Naive thymus-derived CD4-positive, alpha-beta T cell (primary cell): ENCODE measurements at regions of chr9 and their contacts with region 1.

Region 1: DNA sequence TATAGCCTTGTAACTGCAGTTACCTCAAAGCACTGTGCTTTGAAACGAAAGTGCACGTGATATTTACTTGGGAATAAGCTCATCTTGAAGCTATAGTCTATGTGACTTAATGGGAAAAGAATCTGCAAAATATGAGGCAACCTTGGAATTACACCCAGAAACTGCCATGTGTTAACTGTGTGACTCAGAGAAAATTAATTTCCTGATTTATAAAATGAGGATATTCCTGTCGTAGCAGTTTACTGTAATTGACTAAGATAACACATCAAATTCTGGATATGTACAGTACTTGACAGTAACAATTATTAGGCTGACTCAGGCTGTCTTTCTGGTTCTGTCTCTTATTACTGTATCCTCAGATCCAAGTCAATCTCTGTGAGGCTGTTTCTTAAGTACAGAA is 1079.9 kb upstream of the ACO1 start:
- DNase-seq: no peak
- ATAC-seq: no peak
- H3K4me3 ChIP-seq: no peak overlapping the region
- H3K4me3 Mint-ChIP-seq: no peak overlapping the region
- H3K27ac ChIP-seq: no peak overlapping the region
- H3K27ac Mint-ChIP-seq: no peak overlapping the region
- H3K4me1 ChIP-seq: peaks cover 6 to 10% of the 10 kb centered on the region in 2 donors
- H3K4me1 Mint-ChIP-seq: peaks cover 8 to 40% (median 34%) of the 10 kb centered on the region in 7 donors
- H3K27me3 ChIP-seq: no peaks in the 10 kb centered on the region
- H3K27me3 Mint-ChIP-seq: no peaks in the 10 kb centered on the region

Region 2: GRCh38 chr9:31259824-31260223 is 44.8 kb before region 1 on chr9:
- CTCF ChIA-PET with region 1: no interaction called
- POLR2A ChIA-PET with region 1: interaction called, 3 read pairs
- intact Hi-C with region 1: loop called in 1 of 2 experiments (anchors 1 kb)
- DNase-seq: peak in 7 of 9 donors; percentile 56 to 85 (median 80)
- ATAC-seq: peak; percentile 97
- H3K4me3 ChIP-seq: no peak overlapping the region
- H3K4me3 Mint-ChIP-seq: peak overlapping the region; percentile 15 to 72 (median 54)
- H3K27ac ChIP-seq: peak overlapping the region; percentile 19
- H3K27ac Mint-ChIP-seq: peak overlapping the region; percentile 3 to 96 (median 87)
- H3K4me1 ChIP-seq: peaks cover 0 to 16% of the 10 kb centered on the region in 2 donors
- H3K4me1 Mint-ChIP-seq: peaks cover 3 to 33% (median 20%) of the 10 kb centered on the region in 7 donors
- H3K27me3 ChIP-seq: no peaks in the 10 kb centered on the region
- H3K27me3 Mint-ChIP-seq: no peaks in the 10 kb centered on the region

Region 3: DNA sequence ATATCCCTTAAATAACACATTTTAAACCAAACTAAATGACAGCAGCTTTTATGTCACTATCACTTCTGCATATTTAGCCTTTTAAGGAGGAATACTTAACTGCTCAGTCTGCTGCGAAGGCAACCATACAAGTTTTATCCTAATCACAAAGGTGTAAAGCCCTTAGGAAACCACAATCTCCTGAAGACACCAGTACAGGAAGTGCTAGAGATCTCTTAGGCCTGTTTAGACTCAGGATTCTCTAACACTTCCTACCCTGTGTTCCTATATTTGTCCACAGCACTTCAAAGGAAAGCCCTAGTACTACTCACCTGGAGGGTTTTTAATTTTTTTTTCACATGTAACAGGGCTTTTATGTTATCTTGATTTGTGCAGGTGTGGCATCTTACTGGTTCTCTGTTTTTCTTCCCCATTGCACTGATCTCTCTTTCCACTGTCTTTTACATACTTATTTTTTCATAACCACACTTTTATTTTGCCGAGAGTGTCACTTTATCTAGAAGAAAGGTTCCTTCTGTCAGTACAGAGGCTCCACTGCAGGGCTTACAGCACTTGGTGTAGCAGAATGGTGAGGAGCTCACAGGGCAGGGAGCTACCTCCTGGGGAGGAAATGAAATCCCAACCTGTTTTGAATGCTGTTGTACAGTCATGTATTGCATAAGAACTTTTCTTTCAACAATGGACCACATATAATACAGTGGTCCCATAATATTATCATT is 19.3 kb after region 1 on chr9:
- CTCF ChIA-PET with region 1: no interaction called
- POLR2A ChIA-PET with region 1: no interaction called
- intact Hi-C with region 1: loop called in 1 of 2 experiments (anchors 2 kb)
- DNase-seq: peak in 6 of 9 donors; percentile 35 to 69 (median 55)
- ATAC-seq: peak; percentile 73
- H3K4me3 ChIP-seq: peak overlapping the region; percentile 7
- H3K4me3 Mint-ChIP-seq: peak overlapping the region in 9 of 10 donors; percentile 18 to 72 (median 57)
- H3K27ac ChIP-seq: peak overlapping the region; percentile 49
- H3K27ac Mint-ChIP-seq: peak overlapping the region; percentile 30 to 95 (median 78)
- H3K4me1 ChIP-seq: peaks cover 18 to 32% of the 10 kb centered on the region in 2 donors
- H3K4me1 Mint-ChIP-seq: peaks cover 10 to 53% (median 47%) of the 10 kb centered on the region in 7 donors
- H3K27me3 ChIP-seq: no peaks in the 10 kb centered on the region
- H3K27me3 Mint-ChIP-seq: no peaks in the 10 kb centered on the region

Region 4: DNA sequence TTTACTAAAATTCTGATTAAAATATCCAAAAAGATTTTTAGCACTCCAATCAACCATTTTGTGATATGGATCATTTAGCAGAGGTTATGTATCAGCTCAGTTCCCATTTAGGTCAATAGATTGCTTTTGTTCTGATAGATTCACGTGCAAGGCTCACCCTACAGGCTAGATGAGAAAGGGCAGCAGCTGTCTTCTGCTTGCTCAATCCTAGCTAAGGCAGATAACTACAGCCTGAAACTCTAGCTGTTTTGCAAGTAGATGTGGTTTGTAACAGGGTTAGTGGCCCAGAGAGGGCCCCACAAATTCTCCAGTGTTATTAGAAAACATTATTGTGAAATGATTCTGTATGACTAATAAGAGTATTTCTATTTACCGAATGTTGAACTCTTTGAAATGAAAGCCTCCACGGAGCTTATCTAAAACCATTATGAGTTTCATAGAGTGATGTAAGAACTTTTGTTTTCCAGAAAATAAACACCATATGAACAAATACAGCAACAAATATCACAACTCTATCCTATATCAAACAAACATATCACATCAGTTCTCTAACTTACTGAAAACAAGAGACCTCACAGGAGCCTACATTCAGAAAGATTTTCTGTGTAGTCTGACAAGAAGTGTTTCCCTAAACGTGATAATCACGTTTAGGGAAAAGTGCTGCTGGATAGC is 237.9 kb after region 1 on chr9:
- CTCF ChIA-PET with region 1: interaction called, 7 read pairs
- POLR2A ChIA-PET with region 1: interaction called, 4 read pairs
- intact Hi-C with region 1: loop called in 1 of 2 experiments (anchors 1 kb)
- DNase-seq: peak in 5 of 9 donors; percentile 3 to 25 (median 18)
- ATAC-seq: peak; percentile 79
- H3K4me3 ChIP-seq: no peak overlapping the region
- H3K4me3 Mint-ChIP-seq: no peak overlapping the region
- H3K27ac ChIP-seq: no peak overlapping the region
- H3K27ac Mint-ChIP-seq: peak overlapping the region in 1 of 9 donors; percentile 1
- H3K4me1 ChIP-seq: peaks cover 0 to 6% of the 10 kb centered on the region in 2 donors
- H3K4me1 Mint-ChIP-seq: peaks cover 0 to 14% (median 6%) of the 10 kb centered on the region in 7 donors
- H3K27me3 ChIP-seq: no peaks in the 10 kb centered on the region
- H3K27me3 Mint-ChIP-seq: no peaks in the 10 kb centered on the region

Region 5: DNA sequence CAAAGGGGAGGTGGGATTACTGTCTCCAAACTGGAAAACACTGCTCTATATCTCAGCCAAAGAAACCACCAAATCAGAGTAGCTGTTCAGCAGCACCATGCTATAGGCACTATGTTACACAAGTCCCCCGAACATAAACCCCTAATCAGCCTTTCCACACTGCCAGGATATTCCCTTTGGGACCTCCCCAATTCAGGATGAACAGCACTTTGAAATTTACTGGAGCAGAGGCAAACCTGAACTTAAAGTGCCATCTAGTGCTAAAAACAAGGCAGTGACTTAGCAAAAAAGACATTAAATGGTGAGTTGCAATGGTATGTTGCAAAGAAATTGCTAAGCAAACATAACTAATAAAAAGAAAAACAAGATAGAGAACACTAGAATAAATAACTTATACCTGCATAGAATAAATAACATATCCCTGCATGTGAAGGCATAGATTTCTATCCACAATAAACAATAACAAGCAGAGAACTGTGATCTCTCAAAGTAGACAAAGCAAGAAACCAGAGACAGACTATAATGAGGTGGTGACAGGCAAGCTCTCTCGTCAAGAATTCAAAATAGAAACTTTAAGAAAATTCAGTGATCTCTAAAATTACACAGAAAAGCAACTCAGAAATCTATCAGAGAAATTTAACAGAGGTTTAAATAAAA is 495.5 kb after region 1 on chr9:
- CTCF ChIA-PET with region 1: interaction called, 4 read pairs
- POLR2A ChIA-PET with region 1: no interaction called
- intact Hi-C with region 1: loop called in 1 of 2 experiments (anchors 1 kb)
- DNase-seq: peak in 5 of 9 donors; percentile 6 to 26 (median 11)
- ATAC-seq: no peak
- H3K4me3 ChIP-seq: no peak overlapping the region
- H3K4me3 Mint-ChIP-seq: no peak overlapping the region
- H3K27ac ChIP-seq: no peak overlapping the region
- H3K27ac Mint-ChIP-seq: peak overlapping the region in 2 of 9 donors; percentile 11 to 27
- H3K4me1 ChIP-seq: no peaks in the 10 kb centered on the region
- H3K4me1 Mint-ChIP-seq: peaks cover 0 to 19% (median 0%) of the 10 kb centered on the region in 7 donors
- H3K27me3 ChIP-seq: no peaks in the 10 kb centered on the region
- H3K27me3 Mint-ChIP-seq: no peaks in the 10 kb centered on the region

Region 6: DNA sequence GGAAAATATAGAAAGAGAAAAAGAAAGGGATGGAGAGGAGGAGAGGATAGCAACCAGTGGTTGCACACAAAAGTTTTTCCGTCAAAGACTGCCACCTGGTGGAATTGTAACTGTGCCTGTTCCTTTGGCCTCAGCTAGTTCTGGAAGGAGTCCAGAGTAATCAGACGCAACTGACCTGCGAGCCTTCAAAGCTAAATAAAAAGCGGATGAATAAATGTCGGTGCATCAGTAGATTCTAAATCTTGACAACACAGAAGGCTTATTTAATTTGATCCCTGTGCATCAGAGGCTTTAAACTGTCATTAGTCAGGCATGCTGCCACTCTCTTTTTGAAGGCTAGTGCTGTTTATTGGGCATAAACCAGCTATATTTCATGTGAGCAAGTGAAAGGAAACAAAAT is 947.0 kb after region 1 on chr9:
- CTCF ChIA-PET with region 1: no interaction called
- POLR2A ChIA-PET with region 1: no interaction called
- intact Hi-C with region 1: loop called in 1 of 2 experiments (anchors 5 kb)
- DNase-seq: peak in 5 of 9 donors; percentile 13 to 34 (median 24)
- ATAC-seq: no peak
- H3K4me3 ChIP-seq: no peak overlapping the region
- H3K4me3 Mint-ChIP-seq: no peak overlapping the region
- H3K27ac ChIP-seq: no peak overlapping the region
- H3K27ac Mint-ChIP-seq: no peak overlapping the region
- H3K4me1 ChIP-seq: no peaks in the 10 kb centered on the region
- H3K4me1 Mint-ChIP-seq: no peaks in the 10 kb centered on the region
- H3K27me3 ChIP-seq: no peaks in the 10 kb centered on the region
- H3K27me3 Mint-ChIP-seq: peaks cover 2 to 19% (median 9%) of the 10 kb centered on the region in 5 donors